Aorta (tissue), 5 donors: ENCODE measurements at regions of chr14 and their contacts with region 1.

Region 1: DNA sequence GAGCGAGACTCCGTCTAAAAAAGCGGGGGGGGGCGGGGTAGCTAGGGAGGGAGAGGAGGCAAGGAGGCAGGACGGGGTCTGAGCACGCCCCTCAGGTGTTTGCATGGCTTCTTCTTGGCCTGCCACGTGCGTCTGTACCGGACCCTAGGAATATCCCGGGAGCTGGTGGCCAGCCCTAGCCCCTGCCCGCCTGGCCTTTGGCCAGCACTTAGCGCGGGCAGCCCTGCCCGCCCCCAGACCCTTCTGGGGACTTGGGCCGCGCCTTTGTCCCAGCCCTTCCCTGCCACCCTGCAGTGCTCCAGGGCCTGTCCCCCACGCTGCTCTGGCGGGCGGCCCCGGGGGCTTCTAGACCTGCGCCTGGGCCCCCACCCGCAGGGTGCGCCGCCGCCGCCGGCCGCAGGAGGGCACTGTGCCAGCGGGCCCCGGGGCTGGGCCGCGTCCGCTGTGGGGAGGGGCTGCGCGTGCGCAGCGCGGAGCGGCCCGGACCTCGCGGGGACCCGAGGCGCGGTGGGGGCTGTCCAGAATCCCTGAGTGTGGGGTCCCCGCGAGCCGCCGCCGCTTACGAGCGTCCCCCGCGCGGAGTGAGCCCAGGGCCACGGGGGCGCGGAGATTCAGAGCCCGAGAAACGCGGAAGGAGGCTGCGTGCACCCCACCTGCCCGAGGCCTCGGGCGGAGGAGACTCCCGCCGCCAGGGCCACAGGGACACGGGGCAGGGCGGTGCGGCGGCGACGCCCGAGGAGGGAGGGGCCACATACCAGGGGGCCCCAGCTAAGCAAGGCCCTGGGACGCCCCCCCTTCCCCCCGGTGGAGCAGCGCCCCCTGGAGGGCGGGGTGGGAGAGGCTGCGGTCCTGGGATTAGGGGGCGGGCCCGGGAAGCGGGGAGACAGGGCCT is 21.0 kb downstream of the SLC25A29 start:
- DNase-seq: peak; percentile 78 to 90
- ATAC-seq: peak; percentile 92
- H3K4me3 ChIP-seq: peak overlapping the region; percentile 36 to 92
- H3K27ac ChIP-seq: peak overlapping the region in 1 of 2 donors; percentile 66
- H3K4me1 ChIP-seq: no peaks in the 10 kb centered on the region
- H3K27me3 ChIP-seq: no peaks in the 10 kb centered on the region

Region 2: DNA sequence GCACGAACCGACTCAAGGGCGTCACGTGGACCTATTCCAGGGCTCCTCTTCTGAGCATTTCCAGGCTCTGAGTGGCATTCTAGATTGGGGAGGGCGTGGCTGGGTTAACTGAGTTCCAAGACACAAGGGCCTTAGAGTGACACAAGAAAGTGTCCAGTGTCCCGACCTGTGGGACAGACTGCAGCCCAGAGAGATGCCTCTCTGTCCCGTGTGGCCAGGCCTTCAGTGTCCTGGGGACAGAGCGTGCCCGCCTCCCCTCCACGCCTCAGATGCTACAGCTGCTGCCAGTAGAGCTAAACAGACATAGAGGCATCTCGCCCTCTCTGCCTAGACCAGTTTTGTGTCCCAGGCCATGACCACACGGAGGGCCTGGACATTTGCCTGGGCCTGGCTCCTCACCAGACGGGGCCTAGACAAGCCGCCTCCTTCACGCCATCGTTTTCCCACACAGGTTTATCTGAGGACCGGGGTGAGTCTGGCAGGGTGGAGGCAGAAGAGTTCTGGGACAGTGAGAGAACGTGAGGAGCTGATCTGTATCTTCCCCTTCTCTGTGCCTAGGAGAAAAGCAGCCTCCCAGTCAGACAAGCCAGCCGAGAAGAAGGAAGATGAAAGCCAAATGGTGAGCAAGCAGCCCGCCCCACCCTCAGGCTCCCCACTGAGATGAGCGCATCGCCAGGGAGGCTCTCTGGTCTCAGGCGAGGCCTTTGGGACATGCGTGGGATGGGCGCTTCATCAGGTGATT is 152.9 kb before region 1 on chr14:
- intact Hi-C with region 1: no loop called
- DNase-seq: peak in 1 of 2 donors; percentile 84
- ATAC-seq: peak; percentile 36
- H3K4me3 ChIP-seq: no peak overlapping the region
- H3K27ac ChIP-seq: no peak overlapping the region
- H3K4me1 ChIP-seq: no peaks in the 10 kb centered on the region
- H3K27me3 ChIP-seq: no peaks in the 10 kb centered on the region

Region 3: GRCh38 chr14:100317912-100318808 is 32.9 kb after region 1 on chr14:
- intact Hi-C with region 1: loop called in 1 of 2 experiments (anchors 1 kb)
- DNase-seq: peak; percentile 88 to 94
- ATAC-seq: peak; percentile 93
- H3K4me3 ChIP-seq: no peak overlapping the region
- H3K27ac ChIP-seq: no peak overlapping the region
- H3K4me1 ChIP-seq: no peaks in the 10 kb centered on the region
- H3K27me3 ChIP-seq: no peaks in the 10 kb centered on the region

Region 4: GRCh38 chr14:100330388-100330931 is 45.2 kb after region 1 on chr14:
- intact Hi-C with region 1: no loop called
- DNase-seq: no peak
- ATAC-seq: no peak
- H3K4me3 ChIP-seq: no peak overlapping the region
- H3K27ac ChIP-seq: no peak overlapping the region
- H3K4me1 ChIP-seq: no peaks in the 10 kb centered on the region
- H3K27me3 ChIP-seq: no peaks in the 10 kb centered on the region

Region 5: GRCh38 chr14:100350276-100350926 is 65.1 kb after region 1 on chr14:
- intact Hi-C with region 1: no loop called
- DNase-seq: no peak
- ATAC-seq: no peak
- H3K4me3 ChIP-seq: no peak overlapping the region
- H3K27ac ChIP-seq: no peak overlapping the region
- H3K4me1 ChIP-seq: no peaks in the 10 kb centered on the region
- H3K27me3 ChIP-seq: no peaks in the 10 kb centered on the region

Region 6: GRCh38 chr14:100375963-100376735 is 90.9 kb after region 1 on chr14:
- intact Hi-C with region 1: loop called (anchors 5 kb)
- DNase-seq: peak; percentile 96 to 97
- ATAC-seq: peak; percentile 98
- H3K4me3 ChIP-seq: peak within 1 kb of the TSS; percentile 46 to 63
- H3K27ac ChIP-seq: peak within 1 kb of the TSS; percentile 66 to 86
- H3K4me1 ChIP-seq: peaks cover 0 to 4% of the 10 kb centered on the region in 2 donors
- H3K27me3 ChIP-seq: no peaks in the 10 kb centered on the region